Activated B cell treated with CpG ODN at 0.5 μM for 24 hours (primary cell): ENCODE measurements at regions of chr4 and their contacts with region 1.

Region 1: GRCh38 chr4:40185830-40186664 is 10.8 kb upstream of the RHOH start:
- DNase-seq: no peak
- ATAC-seq: peak; percentile 78
- H3K4me3 Mint-ChIP-seq: peak overlapping the region; percentile 80
- H3K27ac Mint-ChIP-seq: peak overlapping the region; percentile 91
- H3K4me1 Mint-ChIP-seq: peaks cover 88% of the 10 kb centered on the region
- H3K27me3 Mint-ChIP-seq: no peaks in the 10 kb centered on the region
- CTCF ChIP-seq: no peak

Region 2: DNA sequence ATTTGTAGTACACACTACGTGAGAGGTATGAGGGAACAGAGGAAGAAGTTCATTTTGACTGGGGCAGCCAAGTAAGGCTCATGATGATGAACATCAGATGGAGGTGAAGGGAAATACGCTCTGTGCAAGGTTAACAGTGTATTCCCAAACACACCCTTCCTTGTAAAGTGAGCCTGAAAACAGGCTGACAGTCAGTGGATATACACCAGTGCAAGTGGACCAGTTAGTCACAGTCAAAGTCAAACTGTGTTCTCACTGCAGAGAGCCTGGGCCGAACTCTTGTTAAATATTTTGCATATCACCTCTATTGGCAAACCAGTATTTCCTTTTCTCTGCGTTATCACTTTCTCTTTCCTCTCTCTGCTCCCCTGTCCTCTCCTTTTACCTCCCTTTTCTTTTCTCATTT is 12.6 kb before region 1 on chr4:
- CTCF ChIA-PET with region 1: interaction called, 4 read pairs
- POLR2A ChIA-PET with region 1: interaction called, 10 read pairs
- intact Hi-C with region 1: loop called (anchors 1 kb)
- DNase-seq: no peak
- ATAC-seq: peak; percentile 83
- H3K4me3 Mint-ChIP-seq: peak overlapping the region; percentile 69
- H3K27ac Mint-ChIP-seq: peak overlapping the region; percentile 81
- H3K4me1 Mint-ChIP-seq: peaks cover 59% of the 10 kb centered on the region
- H3K27me3 Mint-ChIP-seq: no peaks in the 10 kb centered on the region
- CTCF ChIP-seq: no peak